ENCODE measurements at regions of chr5 and their contacts with region 1.

Region 1: GRCh38 chr5:138575194-138576015 is at the start of gene HSPA9:
- DNase-seq: peak; percentile 99
- H3K4me3 Mint-ChIP-seq: peak within 1 kb of the TSS; percentile 94
- H3K27ac Mint-ChIP-seq: peak within 1 kb of the TSS; percentile 99
- H3K4me1 Mint-ChIP-seq: peaks cover 17% of the 10 kb centered on the region
- H3K27me3 Mint-ChIP-seq: no peaks in the 10 kb centered on the region
- CTCF ChIP-seq: no peak
- total RNA-seq, gene HSPA9: 455 and 460 TPM in 2 replicates

Region 2: DNA sequence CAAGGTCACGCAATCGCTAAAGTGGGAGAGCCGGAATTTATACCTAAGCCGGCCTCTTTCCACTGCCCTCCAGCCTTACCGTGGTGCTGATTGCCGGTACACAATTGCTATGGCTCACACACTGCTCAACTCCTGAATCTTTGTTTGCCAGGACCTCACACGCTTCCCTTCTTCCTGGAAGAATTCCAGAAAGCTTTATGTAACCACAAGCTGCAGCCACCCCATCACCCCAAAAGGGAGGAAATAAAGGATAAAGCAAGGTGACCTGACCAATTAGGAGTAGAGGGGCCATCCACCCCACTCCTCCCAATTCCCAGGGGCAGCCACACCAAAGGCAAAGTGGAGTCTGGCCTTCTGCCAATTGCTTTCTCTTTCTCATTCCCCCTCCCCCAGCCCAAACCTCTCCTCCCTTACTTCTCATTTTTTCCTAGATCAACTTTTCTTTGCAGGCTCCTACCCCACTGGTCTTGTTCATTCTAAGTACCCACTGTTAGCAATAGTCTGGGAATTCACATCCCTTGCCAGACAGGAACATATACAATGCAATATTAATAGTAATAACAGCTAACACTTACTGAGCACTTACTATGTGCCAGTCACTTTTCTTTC is 344.3 kb before region 1 on chr5:
- CTCF ChIA-PET with region 1: no interaction called
- intact Hi-C with region 1: no loop called
- DNase-seq: peak; percentile 29
- H3K4me3 Mint-ChIP-seq: no peak overlapping the region
- H3K27ac Mint-ChIP-seq: no peak overlapping the region
- H3K4me1 Mint-ChIP-seq: peaks cover 10% of the 10 kb centered on the region
- H3K27me3 Mint-ChIP-seq: no peaks in the 10 kb centered on the region
- CTCF ChIP-seq: no peak

Region 3: GRCh38 chr5:138352071-138352721 is 223.2 kb before region 1 on chr5 and contains the start of gene KDM3B:
- CTCF ChIA-PET with region 1: no interaction called
- intact Hi-C with region 1: no loop called
- DNase-seq: peak; percentile 98
- H3K4me3 Mint-ChIP-seq: peak within 1 kb of the TSS; percentile 96
- H3K27ac Mint-ChIP-seq: peak within 1 kb of the TSS; percentile 95
- H3K4me1 Mint-ChIP-seq: peaks cover 17% of the 10 kb centered on the region
- H3K27me3 Mint-ChIP-seq: no peaks in the 10 kb centered on the region
- CTCF ChIP-seq: peak; percentile 98
- total RNA-seq, gene KDM3B: 73.5 and 75.1 TPM in 2 replicates

Region 4: DNA sequence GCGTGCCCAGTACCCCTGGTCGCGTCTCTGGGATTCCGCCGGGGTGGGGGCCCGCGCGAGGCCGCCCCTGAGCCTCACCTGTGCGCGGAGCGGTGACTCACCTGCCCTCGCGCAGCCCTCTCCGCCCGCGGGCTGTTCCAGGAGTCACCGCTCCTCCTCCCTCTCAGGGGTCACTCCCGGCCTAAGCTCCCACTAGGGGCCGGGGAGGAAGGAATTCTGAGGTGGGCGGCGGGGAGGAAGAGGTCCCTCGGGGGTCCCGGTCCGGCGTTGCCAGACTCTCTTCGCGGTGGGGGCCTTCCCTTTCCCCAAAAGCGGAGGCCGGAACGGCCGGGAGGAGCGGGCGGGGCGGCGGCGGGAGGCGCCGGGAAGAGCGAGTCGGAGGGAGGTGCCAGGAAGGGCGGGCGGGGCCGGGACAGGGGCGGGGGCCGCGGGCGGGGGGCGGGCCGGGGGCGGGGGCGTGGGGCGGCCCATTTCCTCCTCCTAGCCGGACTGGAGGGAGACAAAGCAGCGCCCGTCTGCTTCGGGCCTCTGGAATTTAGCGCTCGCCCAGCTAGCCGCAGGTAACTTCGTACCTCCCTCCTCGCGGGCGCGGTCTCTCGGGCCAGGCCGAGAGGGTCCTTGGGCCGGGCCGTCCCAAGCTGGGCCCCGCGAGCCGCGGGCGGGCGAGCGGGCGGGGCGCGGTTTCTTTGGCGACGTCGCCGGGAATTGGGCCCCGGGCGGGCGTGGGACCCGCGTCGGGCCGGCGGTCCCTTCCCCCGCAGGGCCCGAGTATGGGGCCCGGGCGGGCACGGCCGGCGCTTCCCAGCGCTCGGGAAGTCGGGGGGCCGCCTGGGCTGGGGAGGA is 177.8 kb after region 1 on chr5 and contains the start of gene CTNNA1:
- CTCF ChIA-PET with region 1: interaction called, 3 read pairs
- intact Hi-C with region 1: loop called (anchors 10 kb)
- DNase-seq: peak; percentile 94
- H3K4me3 Mint-ChIP-seq: peak within 1 kb of the TSS; percentile 89
- H3K27ac Mint-ChIP-seq: peak within 1 kb of the TSS; percentile 95
- H3K4me1 Mint-ChIP-seq: peaks cover 55% of the 10 kb centered on the region
- H3K27me3 Mint-ChIP-seq: no peaks in the 10 kb centered on the region
- CTCF ChIP-seq: no peak
- total RNA-seq, gene CTNNA1: 623 and 734 TPM in 2 replicates

Region 5: DNA sequence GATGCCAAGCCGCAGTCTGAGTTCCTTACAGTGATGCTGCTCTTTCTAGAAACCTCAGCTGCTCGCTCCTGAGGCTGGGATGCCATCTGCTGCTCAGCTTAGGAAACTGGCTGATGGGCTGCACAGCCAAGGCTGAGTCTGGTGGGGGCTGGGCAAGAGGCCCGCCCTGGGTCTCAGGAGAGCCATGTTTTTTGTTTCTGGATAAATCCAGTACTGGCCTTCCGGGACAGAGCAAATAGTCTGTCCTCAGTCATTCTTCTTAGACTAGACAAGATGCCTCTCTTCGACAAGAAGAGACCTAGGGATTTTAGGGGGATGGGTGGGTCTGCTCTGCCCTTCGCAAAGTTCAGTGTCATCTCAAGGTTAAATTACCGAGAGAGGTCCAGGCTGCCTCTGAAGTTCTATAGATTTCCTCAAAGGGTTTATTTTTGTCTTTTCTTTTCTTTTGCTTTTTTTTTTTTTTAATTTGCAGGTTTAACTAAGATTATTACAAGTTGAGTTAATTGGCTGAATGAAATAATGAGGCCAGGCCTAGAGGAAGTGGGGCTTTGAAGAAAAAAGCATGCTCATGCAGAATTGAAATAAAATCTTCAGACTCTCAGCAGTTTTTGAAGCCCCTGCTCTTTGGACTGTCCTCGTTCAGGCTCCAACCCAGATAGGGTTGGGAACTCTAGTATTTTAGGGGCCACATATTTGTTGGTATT is 687.5 kb after region 1 on chr5:
- CTCF ChIA-PET with region 1: interaction called, 9 read pairs
- intact Hi-C with region 1: loop called (anchors 1 kb)
- DNase-seq: peak; percentile 92
- H3K4me3 Mint-ChIP-seq: no peak overlapping the region
- H3K27ac Mint-ChIP-seq: no peak overlapping the region
- H3K4me1 Mint-ChIP-seq: peaks cover 8% of the 10 kb centered on the region
- H3K27me3 Mint-ChIP-seq: peaks cover 34% of the 10 kb centered on the region
- CTCF ChIP-seq: peak; percentile 75

Measured in Calu3 (cell line).